ENCODE measurements at regions of chr1 and their contacts with region 1.

Region 1: GRCh38 chr1:64242895-64243756 is 39.7 kb downstream of the UBE2U start:
- ATAC-seq: peak in 3 of 8 experiments; percentile 50 to 68 (median 57)
- H3K4me3 ChIP-seq: no peak overlapping the region
- H3K27ac ChIP-seq: no peak overlapping the region
- H3K4me1 ChIP-seq: no peaks in the 10 kb centered on the region

Region 2: GRCh38 chr1:63615768-63616420 is 627.2 kb before region 1 on chr1:
- in situ Hi-C with region 1: loop called in 7 of 9 experiments (anchors 10 to 25 kb)
- ATAC-seq: peak; percentile 60 to 86 (median 68)
- H3K4me3 ChIP-seq: no peak overlapping the region
- H3K27ac ChIP-seq: no peak overlapping the region
- H3K4me1 ChIP-seq: peaks cover 0 to 3% of the 10 kb centered on the region in 2 donors

Region 3: DNA sequence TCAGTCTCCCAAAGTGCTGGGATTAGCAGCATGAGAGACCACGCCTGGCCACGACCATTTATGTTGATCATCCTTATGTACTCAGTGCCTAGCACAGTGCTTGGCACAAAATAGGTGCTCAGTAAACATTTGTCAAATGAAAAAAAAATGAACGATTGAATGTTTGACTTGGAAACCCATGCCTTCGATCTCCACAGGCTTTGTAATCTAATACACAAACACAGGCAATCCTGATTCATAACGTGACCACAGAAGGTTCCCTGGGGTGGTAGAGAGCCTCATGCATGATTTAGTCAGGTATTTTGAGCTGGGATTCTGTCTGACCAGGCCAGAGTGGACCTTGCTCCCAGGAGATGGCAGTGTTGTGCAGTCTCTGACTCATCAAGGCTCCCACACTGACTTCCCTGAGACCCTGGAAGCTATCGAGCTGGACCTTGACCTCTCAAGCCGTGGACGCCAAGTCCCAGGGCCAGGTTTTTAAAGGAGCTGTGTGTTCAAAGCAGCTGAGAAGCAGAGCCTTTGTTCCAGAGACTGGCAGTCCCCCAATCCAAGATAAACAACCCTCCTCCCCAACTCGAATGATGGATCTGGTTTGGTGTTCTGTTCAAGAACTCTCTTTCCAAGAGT is 568.8 kb before region 1 on chr1:
- in situ Hi-C with region 1: loop called in 2 of 9 experiments (anchors 10 to 25 kb)
- ATAC-seq: peak; percentile 52 to 100 (median 72)
- H3K4me3 ChIP-seq: no peak overlapping the region
- H3K27ac ChIP-seq: no peak overlapping the region
- H3K4me1 ChIP-seq: no peaks in the 10 kb centered on the region

Region 4: GRCh38 chr1:64530969-64531368 is 287.8 kb after region 1 on chr1:
- in situ Hi-C with region 1: no loop called
- ATAC-seq: no peak
- H3K4me3 ChIP-seq: no peak overlapping the region
- H3K27ac ChIP-seq: no peak overlapping the region
- H3K4me1 ChIP-seq: peaks cover 26 to 32% of the 10 kb centered on the region in 2 donors